Endothelial cell of umbilical vein (primary cell): ENCODE measurements at regions of chr3 and their contacts with region 1.

Region 1: DNA sequence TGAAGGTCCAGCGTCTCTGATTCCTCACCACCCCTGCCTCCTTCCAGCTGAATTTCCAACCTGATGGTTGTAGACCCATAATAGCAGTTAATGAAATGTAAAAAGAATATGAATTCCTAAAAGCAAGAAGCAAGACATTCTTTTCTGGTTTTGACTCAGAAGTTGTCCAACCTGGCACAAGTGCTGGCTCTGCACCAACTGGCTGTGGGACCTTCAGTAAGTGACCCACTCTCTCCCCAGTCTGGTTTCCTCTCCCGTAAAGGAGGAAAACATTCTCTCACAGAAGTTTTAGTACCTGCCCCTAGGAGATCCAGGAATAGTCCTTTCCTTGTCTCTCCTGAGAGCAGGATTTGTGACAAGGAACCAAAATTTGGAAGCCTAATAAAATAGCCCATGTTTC is 236.9 kb upstream of the TRIM42 start:
- DNase-seq: peak; percentile 87
- H3K4me3 ChIP-seq: no peak overlapping the region
- H3K27ac ChIP-seq: no peak overlapping the region
- H3K4me1 ChIP-seq: no peaks in the 10 kb centered on the region
- H3K27me3 ChIP-seq: no peaks in the 10 kb centered on the region
- CTCF ChIP-seq: no peak
- POLR2A ChIP-seq: no peak

Region 2: DNA sequence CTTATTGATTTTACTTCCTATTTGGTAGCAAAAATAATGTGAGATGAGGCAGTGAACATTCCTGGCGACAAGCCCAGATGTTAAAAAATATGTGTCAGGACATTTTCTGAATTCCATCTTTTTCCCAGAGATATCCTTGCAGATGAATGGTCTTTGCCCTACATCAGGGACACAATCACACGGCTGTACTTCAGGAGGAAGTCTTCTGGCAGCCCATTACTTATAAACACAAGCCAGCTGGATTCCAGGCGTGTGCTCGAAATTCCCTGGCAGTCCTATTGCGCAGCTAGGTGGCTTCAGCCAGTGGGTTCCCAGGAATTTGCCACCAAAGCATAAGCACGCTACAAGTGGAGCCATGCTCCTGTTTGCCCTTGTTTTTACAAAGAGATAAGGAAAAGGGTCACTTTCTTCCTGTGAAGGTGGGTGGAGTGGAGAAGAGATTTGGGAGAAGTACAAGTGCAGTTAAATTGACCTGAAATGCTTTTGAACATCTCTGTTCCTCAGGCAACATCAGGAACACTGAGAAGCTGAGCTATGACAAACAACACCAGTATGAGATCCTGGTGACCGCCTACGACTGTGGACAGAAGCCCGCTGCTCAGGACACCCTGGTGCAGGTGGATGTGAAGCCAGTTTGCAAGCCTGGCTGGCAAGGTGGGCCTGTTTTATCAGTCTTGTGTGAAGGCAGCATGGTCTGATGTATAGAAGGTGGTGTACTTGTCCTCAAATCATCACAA is 20.2 kb before region 1 on chr3:
- CTCF ChIA-PET with region 1: no interaction called
- POLR2A ChIA-PET with region 1: no interaction called
- dilution Hi-C with region 1: no loop called
- intact Hi-C with region 1: loop called (anchors 1 kb)
- DNase-seq: peak; percentile 93
- H3K4me3 ChIP-seq: no peak overlapping the region
- H3K27ac ChIP-seq: peak overlapping the region; percentile 52
- H3K4me1 ChIP-seq: no peaks in the 10 kb centered on the region
- H3K27me3 ChIP-seq: no peaks in the 10 kb centered on the region
- CTCF ChIP-seq: no peak
- POLR2A ChIP-seq: no peak